ENCODE measurements at regions of chr6 and their contacts with region 1.

Region 1: DNA sequence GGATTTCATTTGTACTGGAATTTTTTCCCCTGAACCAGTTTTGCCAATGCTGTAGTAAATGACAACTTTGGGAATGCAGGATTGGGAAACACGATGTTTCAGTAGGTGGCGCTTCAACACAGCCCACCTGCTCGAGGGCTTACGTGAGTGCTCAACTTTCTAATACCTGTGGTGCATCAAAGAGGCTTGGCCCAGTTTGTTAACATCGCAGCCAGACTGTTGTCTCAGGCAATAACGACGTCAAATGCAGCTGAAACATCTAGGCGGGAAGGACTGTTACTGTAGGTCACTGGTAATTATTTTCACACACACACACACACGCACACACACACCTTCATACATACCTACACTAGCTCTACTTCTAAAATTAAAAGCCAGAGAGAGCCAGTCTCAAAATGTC is 815.5 kb upstream of the SLC35B3 start:
- DNase-seq: peak; percentile 84
- ATAC-seq: peak; percentile 87
- H3K4me3 ChIP-seq: no peak overlapping the region
- H3K27ac ChIP-seq: no peak overlapping the region
- H3K4me1 ChIP-seq: 0 out of 2 replicates have a peak, but pooled peaks cover 4% of the 10 kb centered on the region
- H3K27me3 ChIP-seq: peaks cover 10% of the 10 kb centered on the region
- CTCF ChIP-seq: peak; percentile 92

Region 2: GRCh38 chr6:8983188-8983688 is 267.6 kb before region 1 on chr6:
- CTCF ChIA-PET with region 1: no interaction called
- POLR2A ChIA-PET with region 1: no interaction called
- intact Hi-C with region 1: loop called (anchors 2 kb)
- DNase-seq: peak; percentile 78
- ATAC-seq: peak; percentile 98
- H3K4me3 ChIP-seq: no peak overlapping the region
- H3K27ac ChIP-seq: no peak overlapping the region
- H3K4me1 ChIP-seq: no peaks in the 10 kb centered on the region; the same call in 1 of the 2 replicates
- H3K27me3 ChIP-seq: peaks cover 21% of the 10 kb centered on the region; the same call in 1 of the 2 replicates
- CTCF ChIP-seq: peak; percentile 96

Region 3: DNA sequence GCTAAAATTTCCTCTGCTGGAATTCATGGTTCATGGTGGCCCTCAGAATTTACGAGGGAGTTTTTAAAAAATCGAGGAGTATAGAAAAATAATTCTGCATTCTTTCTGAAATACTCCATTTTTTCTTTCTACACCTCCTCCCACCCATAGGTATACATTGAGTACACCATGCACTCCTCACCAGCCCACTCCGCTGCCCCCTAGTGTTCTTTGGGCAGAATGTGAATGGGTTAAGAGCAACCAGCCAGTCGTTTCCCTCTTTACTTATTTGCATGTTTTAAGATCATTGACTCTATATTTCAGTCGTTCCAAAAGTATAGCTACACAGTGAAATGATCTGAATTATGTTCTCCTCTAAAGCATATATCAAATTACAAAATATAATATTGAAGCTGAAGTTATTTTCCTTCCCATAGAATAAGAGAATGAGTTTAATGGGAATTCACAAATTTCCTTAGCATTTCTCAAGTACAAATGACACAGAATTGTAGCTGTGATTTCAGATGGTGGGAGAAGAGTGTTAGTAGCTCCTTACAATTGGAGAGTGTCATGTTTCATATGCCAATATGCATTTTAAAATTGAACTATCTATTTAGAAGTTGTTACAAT is 162.2 kb after region 1 on chr6:
- CTCF ChIA-PET with region 1: no interaction called
- POLR2A ChIA-PET with region 1: no interaction called
- intact Hi-C with region 1: loop called (anchors 1 kb)
- DNase-seq: peak; percentile 75
- ATAC-seq: peak; percentile 63
- H3K4me3 ChIP-seq: no peak overlapping the region
- H3K27ac ChIP-seq: no peak overlapping the region
- H3K4me1 ChIP-seq: peaks cover 17% of the 10 kb centered on the region
- H3K27me3 ChIP-seq: no peaks in the 10 kb centered on the region
- CTCF ChIP-seq: peak; percentile 90

Region 4: DNA sequence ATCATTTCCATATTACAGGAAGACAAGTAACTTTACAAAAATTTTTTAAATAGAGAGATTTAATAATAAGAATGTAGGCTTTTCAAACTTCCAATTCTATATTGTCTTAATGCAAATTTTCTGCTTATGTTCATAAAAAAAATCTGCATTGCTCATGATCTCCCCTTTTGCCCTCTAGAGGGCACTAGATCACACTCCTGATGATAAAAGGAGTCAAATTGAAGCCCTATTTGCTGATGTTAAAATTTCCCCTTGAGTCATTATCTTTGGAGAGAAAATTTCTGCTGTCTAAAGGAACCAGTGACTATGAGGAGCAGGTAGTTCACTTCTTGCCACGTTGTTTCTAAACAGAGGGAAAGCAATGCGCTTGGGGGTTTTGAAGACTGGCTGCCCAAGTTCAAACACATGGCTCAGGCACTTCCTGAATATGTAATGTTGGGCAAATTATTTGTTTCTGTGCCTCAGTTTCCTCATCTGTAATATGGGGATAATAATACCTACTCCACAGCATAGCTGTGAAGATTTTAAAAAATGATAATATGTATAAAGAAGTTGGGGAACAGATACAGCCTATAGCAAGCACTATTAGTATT is 289.8 kb after region 1 on chr6:
- CTCF ChIA-PET with region 1: no interaction called
- POLR2A ChIA-PET with region 1: no interaction called
- intact Hi-C with region 1: loop called (anchors 2 kb)
- DNase-seq: peak; percentile 81
- ATAC-seq: peak; percentile 31; the same call in 1 of the 2 replicates
- H3K4me3 ChIP-seq: no peak overlapping the region
- H3K27ac ChIP-seq: no peak overlapping the region
- H3K4me1 ChIP-seq: no peaks in the 10 kb centered on the region
- H3K27me3 ChIP-seq: no peaks in the 10 kb centered on the region
- CTCF ChIP-seq: peak; percentile 83

Region 5: GRCh38 chr6:9610620-9611415 is 360.0 kb after region 1 on chr6:
- CTCF ChIA-PET with region 1: no interaction called
- POLR2A ChIA-PET with region 1: no interaction called
- intact Hi-C with region 1: loop called (anchors 10 kb)
- DNase-seq: no peak
- ATAC-seq: no peak
- H3K4me3 ChIP-seq: no peak overlapping the region
- H3K27ac ChIP-seq: no peak overlapping the region
- H3K4me1 ChIP-seq: no peaks in the 10 kb centered on the region
- H3K27me3 ChIP-seq: peaks cover 63% of the 10 kb centered on the region
- CTCF ChIP-seq: no peak

Region 6: GRCh38 chr6:10429638-10430427 is 1179.0 kb after region 1 on chr6:
- CTCF ChIA-PET with region 1: interaction called, 4 read pairs
- POLR2A ChIA-PET with region 1: no interaction called
- intact Hi-C with region 1: loop called (anchors 1 kb)
- DNase-seq: peak; percentile 75
- ATAC-seq: peak; percentile 92
- H3K4me3 ChIP-seq: peak overlapping the region; percentile 60
- H3K27ac ChIP-seq: no peak overlapping the region
- H3K4me1 ChIP-seq: peaks cover 20% of the 10 kb centered on the region
- H3K27me3 ChIP-seq: no peaks in the 10 kb centered on the region
- CTCF ChIP-seq: peak; percentile 90